Activated CD8-positive, alpha-beta T cell treated with anti-CD3 and anti-CD28 coated beads, Interleukin-2, amount 10 ng/mL, durations not matched to agents 7 days and 5 days (primary cell): ENCODE measurements at regions of chr12 and their contacts with region 1.

Region 1: DNA sequence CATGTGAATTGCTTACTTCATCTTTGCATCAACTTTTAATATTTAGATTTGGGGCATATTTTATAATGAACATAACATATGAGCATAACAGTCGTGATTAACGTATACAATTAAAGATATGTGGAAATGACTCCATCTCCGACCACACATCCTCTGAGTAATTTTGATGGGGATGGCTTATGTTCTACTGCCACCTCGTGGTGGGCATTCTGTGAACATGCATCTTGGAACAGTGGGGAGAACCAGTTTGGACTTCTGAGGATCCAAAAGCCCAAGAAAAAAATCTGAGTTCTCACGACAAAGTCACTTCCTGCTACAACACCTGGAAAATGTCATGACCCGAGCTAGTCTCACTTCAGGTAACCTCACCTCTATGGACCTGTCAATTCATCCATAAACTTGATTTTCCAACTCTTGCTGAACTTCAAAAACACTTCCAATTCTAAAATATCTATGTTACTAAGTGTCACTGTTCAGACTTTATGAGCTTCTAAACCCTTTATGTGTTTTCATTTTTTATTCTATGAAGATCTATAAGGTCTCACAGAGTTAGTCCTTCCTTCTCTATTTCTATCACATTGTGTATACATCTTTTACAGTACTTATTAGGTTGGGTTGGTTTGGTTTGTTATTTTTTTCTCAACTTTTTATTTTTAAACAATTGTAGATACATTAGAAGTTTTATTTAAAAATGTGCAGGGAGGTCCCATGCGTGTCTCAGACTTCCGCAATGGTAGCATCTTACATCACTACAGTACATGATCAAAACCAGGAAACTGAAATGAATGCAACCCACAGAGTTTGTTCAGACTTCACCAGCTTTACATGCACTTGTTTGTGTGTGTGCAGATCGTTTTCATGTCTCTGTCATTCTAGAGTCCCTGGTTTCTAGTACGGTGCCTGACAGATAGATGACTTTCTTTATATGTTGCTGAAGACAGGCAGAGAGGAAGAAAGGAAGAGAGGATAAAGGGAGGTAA is 38.2 kb upstream of the STAB2 start:
- DNase-seq: peak; percentile 79
- ATAC-seq: peak; percentile 73
- H3K4me3 Mint-ChIP-seq: no peak overlapping the region
- H3K27ac Mint-ChIP-seq: no peak overlapping the region
- H3K4me1 Mint-ChIP-seq: no peaks in the 10 kb centered on the region
- H3K27me3 Mint-ChIP-seq: peaks cover 19% of the 10 kb centered on the region

Region 2: GRCh38 chr12:102883204-102883799 is 665.6 kb before region 1 on chr12:
- CTCF ChIA-PET with region 1: interaction called, 51 read pairs
- POLR2A ChIA-PET with region 1: no interaction called
- DNase-seq: peak; percentile 39
- ATAC-seq: peak; percentile 47
- H3K4me3 Mint-ChIP-seq: no peak overlapping the region
- H3K27ac Mint-ChIP-seq: no peak overlapping the region
- H3K4me1 Mint-ChIP-seq: no peaks in the 10 kb centered on the region
- H3K27me3 Mint-ChIP-seq: peaks cover 5% of the 10 kb centered on the region

Region 3: GRCh38 chr12:102948941-102949352 is 600.0 kb before region 1 on chr12:
- CTCF ChIA-PET with region 1: interaction called, 79 read pairs
- POLR2A ChIA-PET with region 1: no interaction called
- DNase-seq: peak; percentile 64
- ATAC-seq: no peak
- H3K4me3 Mint-ChIP-seq: no peak overlapping the region
- H3K27ac Mint-ChIP-seq: no peak overlapping the region
- H3K4me1 Mint-ChIP-seq: peaks cover 15% of the 10 kb centered on the region
- H3K27me3 Mint-ChIP-seq: peaks cover 59% of the 10 kb centered on the region

Region 4: DNA sequence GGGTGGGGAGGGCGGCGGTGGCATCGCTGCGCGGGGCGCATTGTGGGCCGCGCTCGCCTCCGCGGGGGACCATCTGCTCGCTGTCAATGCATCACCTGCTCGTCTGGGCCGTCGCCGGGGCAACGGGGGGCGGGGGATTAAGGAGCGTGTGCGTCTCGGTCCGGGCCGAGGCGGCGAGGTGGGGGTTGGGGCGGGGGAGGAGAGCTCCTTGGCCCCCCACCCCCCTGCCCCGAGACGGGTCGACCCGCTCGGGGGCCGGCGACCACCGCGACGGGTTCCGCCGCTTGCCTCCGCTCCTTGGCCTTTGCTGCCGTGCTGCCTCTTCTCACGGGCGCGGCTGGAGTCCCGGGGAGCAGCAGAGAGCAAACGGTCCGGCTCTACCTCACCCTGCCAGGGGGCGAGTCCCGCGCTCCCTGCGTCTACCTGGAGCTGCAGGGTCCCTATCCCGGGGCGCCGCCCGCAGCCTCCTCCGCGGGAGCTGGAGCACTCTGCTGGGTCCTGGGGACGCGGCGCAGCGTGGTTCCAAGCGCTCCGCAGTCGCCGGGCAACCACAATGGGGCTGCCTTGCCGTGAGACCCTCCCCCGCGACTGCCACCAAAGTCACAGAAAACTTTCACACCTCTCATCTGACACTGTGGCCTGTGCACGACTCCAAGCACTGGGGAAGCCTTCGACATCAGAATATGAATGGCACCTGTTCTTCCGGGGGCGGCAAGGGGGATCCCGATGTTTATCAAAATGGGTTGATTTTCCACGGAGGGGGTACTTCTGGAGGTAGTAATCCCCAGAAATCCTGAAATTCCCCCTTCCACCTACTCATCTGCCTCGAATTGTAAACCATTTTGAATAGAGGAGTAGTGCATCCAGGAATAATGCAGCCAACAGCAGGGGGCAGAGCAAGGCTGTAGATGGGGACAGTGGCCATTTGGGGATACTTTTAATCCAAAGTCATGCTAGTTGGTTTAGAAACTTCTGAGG is 53.1 kb before region 1 on chr12 and contains the start of gene C12orf42:
- CTCF ChIA-PET with region 1: interaction called, 18 read pairs
- POLR2A ChIA-PET with region 1: no interaction called
- DNase-seq: peak; percentile 68
- ATAC-seq: peak; percentile 87
- H3K4me3 Mint-ChIP-seq: peak within 1 kb of the TSS; percentile 72
- H3K27ac Mint-ChIP-seq: peak within 1 kb of the TSS; percentile 66
- H3K4me1 Mint-ChIP-seq: peaks cover 15% of the 10 kb centered on the region
- H3K27me3 Mint-ChIP-seq: peaks cover 27% of the 10 kb centered on the region
- total RNA-seq, gene C12orf42: 0.84 to 0.91 TPM

Region 5: GRCh38 chr12:103530307-103531066 is 18.4 kb before region 1 on chr12:
- CTCF ChIA-PET with region 1: interaction called, 14 read pairs
- POLR2A ChIA-PET with region 1: no interaction called
- DNase-seq: no peak
- ATAC-seq: no peak
- H3K4me3 Mint-ChIP-seq: no peak overlapping the region
- H3K27ac Mint-ChIP-seq: no peak overlapping the region
- H3K4me1 Mint-ChIP-seq: no peaks in the 10 kb centered on the region
- H3K27me3 Mint-ChIP-seq: peaks cover 2% of the 10 kb centered on the region

Region 6: GRCh38 chr12:103978384-103978982 is 429.6 kb after region 1 on chr12:
- CTCF ChIA-PET with region 1: no interaction called
- POLR2A ChIA-PET with region 1: no interaction called
- DNase-seq: no peak
- ATAC-seq: no peak
- H3K4me3 Mint-ChIP-seq: no peak overlapping the region
- H3K27ac Mint-ChIP-seq: no peak overlapping the region
- H3K4me1 Mint-ChIP-seq: peaks cover 17% of the 10 kb centered on the region
- H3K27me3 Mint-ChIP-seq: no peaks in the 10 kb centered on the region